AG04449 (cell line): ENCODE measurements at regions of chr5 and their contacts with region 1.

Region 1: GRCh38 chr5:118987988-118988865 is at the start of gene DTWD2:
- DNase-seq: peak; percentile 24
- H3K4me3 ChIP-seq: peak within 1 kb of the TSS; percentile 74
- CTCF ChIP-seq: peak; percentile 95

Region 2: GRCh38 chr5:119016125-119016774 is 28.0 kb after region 1 on chr5:
- CTCF ChIA-PET with region 1: interaction called, 34 read pairs
- POLR2A ChIA-PET with region 1: no interaction called
- DNase-seq: no peak
- H3K4me3 ChIP-seq: no peak overlapping the region
- CTCF ChIP-seq: no peak

Region 3: DNA sequence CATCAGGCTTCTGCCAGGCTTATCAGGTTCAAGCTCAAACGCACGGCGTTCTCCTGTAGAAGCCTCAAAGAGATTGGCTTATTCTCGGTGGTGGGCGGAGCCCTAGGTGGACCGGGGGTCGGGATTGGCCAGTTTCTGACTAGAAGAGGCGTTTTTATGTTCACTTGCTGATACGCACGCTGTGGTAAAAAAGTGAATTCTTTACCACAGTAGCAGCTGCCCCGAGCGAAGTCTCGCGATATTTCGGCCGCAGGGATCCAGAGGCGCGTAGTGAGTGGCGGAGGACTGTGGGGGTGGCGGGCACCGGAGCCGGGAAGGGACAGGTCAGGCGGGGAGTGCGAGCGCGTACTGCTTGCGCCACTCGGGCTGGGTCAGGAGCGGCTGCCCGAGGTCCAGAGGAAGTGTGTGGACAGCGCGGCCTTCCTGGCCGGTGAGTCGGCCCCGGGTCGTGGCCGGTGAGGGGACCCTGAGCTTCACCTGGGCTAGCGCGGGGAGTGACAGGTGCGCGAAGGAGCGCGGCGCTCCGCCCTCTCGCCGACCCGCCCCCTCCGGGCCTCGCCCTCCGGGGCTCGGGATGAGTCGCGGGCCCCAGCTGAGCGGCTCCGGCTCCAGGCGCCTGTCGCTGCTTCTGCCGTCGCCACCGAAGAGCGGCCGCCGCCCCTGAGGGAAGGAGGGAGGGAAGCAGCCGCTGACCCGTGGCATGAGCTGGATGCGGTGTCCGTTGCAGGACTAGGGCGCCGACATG is 82.8 kb after region 1 on chr5 and contains the start of gene DMXL1:
- CTCF ChIA-PET with region 1: interaction called, 19 read pairs
- POLR2A ChIA-PET with region 1: interaction called, 4 read pairs
- DNase-seq: peak; percentile 96
- H3K4me3 ChIP-seq: peak within 1 kb of the TSS; percentile 99
- CTCF ChIP-seq: no peak

Region 4: DNA sequence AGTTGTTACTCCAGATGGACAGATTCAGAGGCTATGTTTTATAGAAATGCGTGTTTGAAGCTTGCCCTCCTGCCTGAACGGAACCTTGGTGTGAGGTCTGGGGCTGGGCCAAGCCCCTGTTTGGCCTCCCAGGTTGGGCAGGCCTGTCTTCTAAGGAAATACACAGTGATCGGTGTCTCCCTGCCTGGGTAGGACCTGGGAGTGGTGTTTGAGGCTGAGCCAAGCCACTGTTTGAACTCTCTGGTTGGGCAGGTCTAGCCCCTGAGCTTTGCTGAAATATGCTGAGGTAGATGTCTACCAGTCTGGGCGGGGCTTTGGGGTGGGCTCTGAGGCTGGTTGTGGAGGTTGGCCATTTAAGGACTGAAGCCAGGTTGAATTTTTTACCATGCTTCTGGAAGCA is 173.2 kb after region 1 on chr5:
- CTCF ChIA-PET with region 1: no interaction called
- POLR2A ChIA-PET with region 1: no interaction called
- DNase-seq: no peak
- H3K4me3 ChIP-seq: no peak overlapping the region
- CTCF ChIP-seq: no peak

Region 5: GRCh38 chr5:119397518-119398380 is 409.5 kb after region 1 on chr5:
- CTCF ChIA-PET with region 1: interaction called, 16 read pairs
- POLR2A ChIA-PET with region 1: interaction called, 3 read pairs
- DNase-seq: no peak
- H3K4me3 ChIP-seq: no peak overlapping the region
- CTCF ChIP-seq: no peak

Region 6: DNA sequence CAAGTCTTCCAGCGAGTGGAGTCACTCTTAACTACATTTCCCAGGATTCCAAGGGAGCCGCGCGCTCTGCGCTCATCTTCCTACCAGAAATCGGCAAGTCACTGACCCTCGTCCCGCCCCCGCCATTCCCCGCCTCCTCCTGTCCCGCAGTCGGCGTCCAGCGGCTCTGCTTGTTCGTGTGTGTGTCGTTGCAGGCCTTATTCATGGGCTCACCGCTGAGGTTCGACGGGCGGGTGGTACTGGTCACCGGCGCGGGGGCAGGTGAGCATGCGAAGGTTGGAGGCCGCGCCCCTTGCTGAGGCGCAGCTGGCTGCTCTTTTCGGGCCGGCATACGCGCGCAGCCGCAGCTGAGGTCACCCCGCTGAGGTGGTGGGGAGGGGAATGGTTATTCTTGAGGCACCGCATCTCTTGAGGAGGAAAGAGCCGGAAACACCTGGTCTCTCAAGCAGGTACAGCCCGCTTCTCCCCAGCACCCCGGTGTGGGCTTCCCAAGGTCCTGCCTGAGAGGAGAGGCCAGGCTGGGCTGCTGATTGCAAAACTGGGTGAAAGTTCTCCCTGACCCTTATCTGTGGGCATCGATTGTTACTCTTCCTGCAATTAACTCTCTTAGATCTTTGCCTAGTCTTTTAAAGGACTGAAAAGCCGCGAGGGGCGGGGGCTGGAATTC is 464.3 kb after region 1 on chr5 and contains the start of gene HSD17B4:
- CTCF ChIA-PET with region 1: interaction called, 15 read pairs
- POLR2A ChIA-PET with region 1: no interaction called
- DNase-seq: peak; percentile 38
- H3K4me3 ChIP-seq: peak within 1 kb of the TSS; percentile 88
- CTCF ChIP-seq: no peak